Tibial artery (tissue), 4 donors: ENCODE measurements at regions of chr2 and their contacts with region 1.

Region 1: GRCh38 chr2:121071034-121071504 is 213.9 kb downstream of the TFCP2L1 start:
- DNase-seq: peak; percentile 47 to 82
- H3K4me3 ChIP-seq: no peak overlapping the region
- H3K27ac ChIP-seq: no peak overlapping the region
- H3K4me1 ChIP-seq: peaks cover 0 to 11% (median 8%) of the 10 kb centered on the region in 4 donors
- H3K27me3 ChIP-seq: peaks cover 0 to 48% of the 10 kb centered on the region in 2 donors
- CTCF ChIP-seq: peak; percentile 95 to 99

Region 2: GRCh38 chr2:120693121-120693520 is 377.9 kb before region 1 on chr2:
- intact Hi-C with region 1: loop called (anchors 5 kb)
- DNase-seq: no peak
- H3K4me3 ChIP-seq: no peak overlapping the region
- H3K27ac ChIP-seq: no peak overlapping the region
- H3K4me1 ChIP-seq: peaks cover 0 to 7% (median 0%) of the 10 kb centered on the region in 4 donors
- H3K27me3 ChIP-seq: peaks cover 0 to 26% of the 10 kb centered on the region in 2 donors
- CTCF ChIP-seq: no peak

Region 3: DNA sequence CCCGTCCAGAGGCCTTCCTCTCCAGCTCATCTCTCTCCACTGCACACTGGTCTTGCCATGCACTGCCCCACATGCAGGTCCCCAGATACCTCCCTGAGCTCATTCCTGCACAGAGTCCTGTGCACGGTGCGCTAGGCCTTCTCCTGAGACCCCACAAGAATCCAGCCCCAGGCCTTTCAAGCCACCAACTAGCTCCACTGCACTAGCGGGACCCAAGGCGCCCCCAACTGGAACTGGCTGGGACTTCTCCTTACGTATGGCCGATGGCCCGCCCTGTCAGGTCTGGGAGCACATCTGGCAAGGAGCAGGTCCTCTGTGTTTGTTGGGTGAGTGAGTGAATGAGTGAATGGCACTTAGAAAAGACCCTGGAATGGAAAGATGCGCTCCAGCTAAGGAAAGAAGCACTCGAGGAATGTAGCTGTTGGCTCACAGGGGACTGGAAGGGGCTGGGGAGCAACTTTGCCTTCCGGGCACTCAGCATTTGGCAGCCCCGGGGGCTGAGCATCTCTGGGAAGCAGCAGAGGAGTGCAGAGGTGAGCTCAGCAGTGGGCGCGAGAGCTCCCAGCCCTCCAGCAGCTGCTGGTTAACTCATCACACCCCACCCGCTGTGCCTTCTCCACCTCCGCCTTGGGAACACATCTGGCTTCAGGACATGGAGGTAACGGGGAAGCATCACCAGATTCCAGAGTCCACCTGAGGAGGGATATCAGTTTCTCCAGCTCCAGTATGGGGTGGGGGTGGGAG is 112.3 kb before region 1 on chr2:
- intact Hi-C with region 1: loop called (anchors 10 kb)
- DNase-seq: no peak
- H3K4me3 ChIP-seq: no peak overlapping the region
- H3K27ac ChIP-seq: no peak overlapping the region
- H3K4me1 ChIP-seq: no peaks in the 10 kb centered on the region
- H3K27me3 ChIP-seq: no peaks in the 10 kb centered on the region
- CTCF ChIP-seq: peak in 1 of 2 experiments; percentile 17

Region 4: GRCh38 chr2:121088251-121089165 is 17.4 kb after region 1 on chr2:
- intact Hi-C with region 1: no loop called
- DNase-seq: no peak
- H3K4me3 ChIP-seq: no peak overlapping the region
- H3K27ac ChIP-seq: no peak overlapping the region
- H3K4me1 ChIP-seq: peaks cover 0 to 8% (median 4%) of the 10 kb centered on the region in 4 donors
- H3K27me3 ChIP-seq: peaks cover 0 to 42% of the 10 kb centered on the region in 2 donors
- CTCF ChIP-seq: no peak